HAP-1 (cell line): ENCODE measurements at regions of chr4 and their contacts with region 1.

Region 1: GRCh38 chr4:17347445-17347844 is 164.4 kb downstream of the QDPR start:
- DNase-seq: peak; percentile 45 to 62
- H3K4me3 ChIP-seq: no peak overlapping the region
- H3K4me1 ChIP-seq: no peaks in the 10 kb centered on the region; the same call in 1 of the 2 replicates
- H3K27me3 ChIP-seq: no peaks in the 10 kb centered on the region

Region 2: GRCh38 chr4:17045866-17046265 is 301.6 kb before region 1 on chr4:
- in situ Hi-C with region 1: no loop called
- DNase-seq: no peak
- H3K4me3 ChIP-seq: no peak overlapping the region
- H3K4me1 ChIP-seq: no peaks in the 10 kb centered on the region
- H3K27me3 ChIP-seq: no peaks in the 10 kb centered on the region

Region 3: DNA sequence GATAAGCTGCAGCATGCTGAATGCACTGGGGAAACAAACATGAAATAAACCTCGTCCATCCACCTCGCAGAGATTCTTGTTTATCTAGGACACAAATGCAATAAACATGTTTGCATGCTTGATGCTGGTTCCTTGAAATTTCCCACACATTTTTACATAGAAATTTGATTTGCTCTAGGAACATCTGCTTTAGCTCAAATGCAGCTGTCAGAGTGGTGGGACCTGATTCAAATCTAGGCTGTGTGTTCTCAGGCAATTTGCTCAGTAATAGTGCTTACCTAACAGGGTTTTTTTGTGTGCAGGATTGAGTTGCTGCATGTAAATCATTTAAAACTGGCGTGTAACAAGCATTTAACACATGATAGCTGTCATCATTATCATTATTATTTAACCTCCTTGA is 128.7 kb before region 1 on chr4:
- in situ Hi-C with region 1: no loop called
- DNase-seq: no peak
- H3K4me3 ChIP-seq: no peak overlapping the region
- H3K4me1 ChIP-seq: no peaks in the 10 kb centered on the region
- H3K27me3 ChIP-seq: no peaks in the 10 kb centered on the region

Region 4: DNA sequence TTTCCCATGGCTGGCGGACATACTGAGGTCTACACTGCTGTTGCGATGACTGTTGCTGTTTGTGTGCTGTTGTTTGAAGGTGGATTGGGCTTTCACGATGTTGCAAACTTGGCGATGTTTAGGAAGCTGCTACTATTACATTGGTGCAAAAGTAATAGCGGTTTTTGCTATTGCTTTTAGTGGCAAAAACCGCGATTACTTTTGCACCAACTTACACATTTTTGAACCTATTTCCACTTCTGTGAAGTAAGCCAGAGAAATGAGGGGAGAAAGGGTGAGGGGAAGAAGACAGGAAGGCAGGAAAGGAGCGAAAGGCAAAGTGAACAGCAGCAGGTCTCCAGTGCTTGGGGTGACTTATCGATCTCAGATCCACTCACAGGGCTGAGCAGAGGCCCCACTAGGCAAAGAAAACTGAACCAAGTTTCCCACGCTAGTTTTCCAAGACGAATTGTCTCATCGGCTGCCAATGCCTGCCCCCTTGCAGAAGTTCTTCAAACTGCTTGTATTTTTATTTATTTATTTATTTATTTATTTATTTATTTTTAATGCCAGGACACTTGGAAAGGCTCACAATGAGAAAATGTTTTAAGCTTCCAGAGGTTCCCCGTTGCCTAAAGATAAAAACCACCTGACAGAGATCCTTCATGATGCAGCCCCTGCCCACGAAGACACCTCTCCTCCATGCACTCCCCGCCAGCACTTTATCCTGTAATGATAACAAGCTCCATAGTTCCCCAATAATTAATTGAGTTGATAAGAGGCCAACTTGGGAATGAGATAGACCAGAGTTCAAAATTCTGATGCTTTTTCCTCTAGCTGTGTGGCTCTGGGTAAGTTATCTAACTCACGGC is 121.2 kb after region 1 on chr4:
- in situ Hi-C with region 1: loop called (anchors 5 kb)
- DNase-seq: peak; percentile 30 to 61
- H3K4me3 ChIP-seq: no peak overlapping the region
- H3K4me1 ChIP-seq: no peaks in the 10 kb centered on the region
- H3K27me3 ChIP-seq: no peaks in the 10 kb centered on the region